Esophagus muscularis mucosa (tissue), 4 donors: ENCODE measurements at regions of chr11 and their contacts with region 1.

Region 1: DNA sequence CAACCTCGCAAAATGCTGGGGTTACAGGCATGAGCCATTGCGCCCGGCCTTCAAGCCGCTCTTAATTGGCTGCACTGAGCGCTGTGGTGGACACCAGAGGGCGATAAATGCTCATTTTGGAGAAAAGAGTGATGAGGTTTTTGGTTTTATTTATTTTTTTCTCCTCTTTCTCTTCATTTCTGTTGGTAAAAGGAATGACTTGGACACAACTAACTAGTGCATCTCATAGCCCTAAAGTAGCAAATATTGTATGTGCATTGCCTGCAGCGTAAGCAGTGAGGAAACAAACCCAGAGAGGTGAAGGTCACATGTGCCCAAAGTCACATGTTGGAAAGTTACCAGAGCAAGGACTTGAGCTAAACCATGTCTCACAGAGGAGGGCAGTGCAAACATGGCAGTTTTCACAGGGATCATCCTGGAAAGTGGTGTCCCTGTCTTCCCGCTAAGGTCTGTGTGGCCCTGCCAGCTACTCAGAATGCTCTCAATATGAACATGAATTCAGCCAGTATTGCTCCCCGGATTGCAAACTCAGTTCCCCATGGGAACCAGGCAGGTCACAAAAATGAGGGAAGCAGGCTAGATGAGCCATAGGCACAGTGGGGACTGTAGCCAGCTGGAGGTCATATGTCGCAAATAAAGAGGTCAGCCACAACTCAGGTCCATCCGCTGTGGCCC is 8.6 kb upstream of the CD82 start:
- DNase-seq: no peak
- H3K4me3 ChIP-seq: no peak overlapping the region
- H3K27ac ChIP-seq: no peak overlapping the region
- H3K4me1 ChIP-seq: peaks cover 3 to 8% (median 6%) of the 10 kb centered on the region in 4 donors
- H3K27me3 ChIP-seq: no peaks in the 10 kb centered on the region
- CTCF ChIP-seq: peak; percentile 78 to 89 (median 82)
- EP300 ChIP-seq: no peak
- POLR2A ChIP-seq: no peak

Region 2: GRCh38 chr11:44191322-44192016 is 365.4 kb before region 1 on chr11:
- intact Hi-C with region 1: no loop called
- DNase-seq: no peak
- H3K4me3 ChIP-seq: no peak overlapping the region
- H3K27ac ChIP-seq: no peak overlapping the region
- H3K4me1 ChIP-seq: no peaks in the 10 kb centered on the region
- H3K27me3 ChIP-seq: no peaks in the 10 kb centered on the region
- CTCF ChIP-seq: no peak
- EP300 ChIP-seq: no peak
- POLR2A ChIP-seq: no peak

Region 3: GRCh38 chr11:44615913-44616791 is 59.3 kb after region 1 on chr11:
- intact Hi-C with region 1: loop called (anchors 1 kb)
- DNase-seq: no peak
- H3K4me3 ChIP-seq: no peak overlapping the region
- H3K27ac ChIP-seq: no peak overlapping the region
- H3K4me1 ChIP-seq: peaks cover 20 to 35% (median 28%) of the 10 kb centered on the region in 4 donors
- H3K27me3 ChIP-seq: no peaks in the 10 kb centered on the region
- CTCF ChIP-seq: no peak
- EP300 ChIP-seq: no peak
- POLR2A ChIP-seq: no peak

Region 4: GRCh38 chr11:44911029-44911814 is 354.4 kb after region 1 on chr11:
- intact Hi-C with region 1: loop called (anchors 5 kb)
- DNase-seq: peak; percentile 98
- H3K4me3 ChIP-seq: no peak overlapping the region
- H3K27ac ChIP-seq: peak overlapping the region; percentile 13 to 45 (median 38)
- H3K4me1 ChIP-seq: peaks cover 17 to 38% (median 30%) of the 10 kb centered on the region in 4 donors
- H3K27me3 ChIP-seq: no peaks in the 10 kb centered on the region
- CTCF ChIP-seq: peak; percentile 81 to 87 (median 85)
- EP300 ChIP-seq: no peak
- POLR2A ChIP-seq: no peak